ENCODE measurements at regions of chr6 and their contacts with region 1.

Region 1: GRCh38 chr6:24689964-24690363 is 23.1 kb downstream of the ACOT13 start:
- DNase-seq: no peak
- ATAC-seq: no peak

Region 2: GRCh38 chr6:24415753-24416152 is 274.2 kb before region 1 on chr6:
- intact Hi-C with region 1: loop called in 1 of 2 experiments (anchors 10 kb)
- DNase-seq: no peak
- ATAC-seq: no peak

Region 3: DNA sequence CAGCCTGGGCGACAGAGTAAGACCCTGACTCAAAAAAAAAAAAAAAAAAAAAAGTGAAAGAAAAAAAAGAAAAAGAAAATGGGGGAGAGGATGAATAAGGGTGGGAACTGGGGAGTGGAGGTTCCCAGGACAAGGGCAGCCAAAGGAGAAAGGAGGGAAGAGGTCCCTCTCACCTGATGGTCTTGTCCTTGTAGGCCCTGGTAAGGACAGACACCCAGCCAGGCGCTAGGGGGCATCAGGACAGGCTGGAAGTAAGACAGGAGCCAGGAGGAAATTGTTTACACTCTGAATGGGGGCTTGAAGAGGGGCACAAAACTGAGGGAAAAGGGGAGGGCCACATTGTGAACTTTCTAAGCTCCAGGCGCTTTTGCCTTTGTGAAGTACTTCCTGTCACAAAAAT is 197.5 kb before region 1 on chr6:
- intact Hi-C with region 1: no loop called
- DNase-seq: peak in 1 of 2 donors; percentile 50
- ATAC-seq: no peak

Region 4: DNA sequence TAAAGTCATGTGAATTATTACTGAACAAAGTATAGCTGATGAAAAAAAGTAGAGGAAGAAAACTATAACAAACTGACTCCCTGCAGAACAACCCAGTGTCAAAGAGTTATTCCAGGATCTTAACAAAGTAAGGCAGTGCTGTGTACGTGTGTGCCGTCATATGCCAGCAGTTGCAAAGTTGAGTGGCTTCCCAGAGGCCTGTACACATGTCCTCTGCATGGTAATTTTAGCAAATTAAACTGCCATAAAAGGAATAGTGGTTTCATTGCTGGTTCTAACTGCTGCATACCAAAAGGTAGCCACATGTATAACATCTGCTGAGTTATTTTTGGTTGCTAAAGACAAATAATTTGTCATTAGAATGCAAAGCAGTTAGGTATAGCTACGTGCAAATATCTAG is 201.0 kb after region 1 on chr6:
- intact Hi-C with region 1: no loop called
- DNase-seq: no peak
- ATAC-seq: no peak